Activated B cell treated with CpG ODN at 0.5 μM for 24 hours (primary cell): ENCODE measurements at regions of chr7 and their contacts with region 1.

Region 1: DNA sequence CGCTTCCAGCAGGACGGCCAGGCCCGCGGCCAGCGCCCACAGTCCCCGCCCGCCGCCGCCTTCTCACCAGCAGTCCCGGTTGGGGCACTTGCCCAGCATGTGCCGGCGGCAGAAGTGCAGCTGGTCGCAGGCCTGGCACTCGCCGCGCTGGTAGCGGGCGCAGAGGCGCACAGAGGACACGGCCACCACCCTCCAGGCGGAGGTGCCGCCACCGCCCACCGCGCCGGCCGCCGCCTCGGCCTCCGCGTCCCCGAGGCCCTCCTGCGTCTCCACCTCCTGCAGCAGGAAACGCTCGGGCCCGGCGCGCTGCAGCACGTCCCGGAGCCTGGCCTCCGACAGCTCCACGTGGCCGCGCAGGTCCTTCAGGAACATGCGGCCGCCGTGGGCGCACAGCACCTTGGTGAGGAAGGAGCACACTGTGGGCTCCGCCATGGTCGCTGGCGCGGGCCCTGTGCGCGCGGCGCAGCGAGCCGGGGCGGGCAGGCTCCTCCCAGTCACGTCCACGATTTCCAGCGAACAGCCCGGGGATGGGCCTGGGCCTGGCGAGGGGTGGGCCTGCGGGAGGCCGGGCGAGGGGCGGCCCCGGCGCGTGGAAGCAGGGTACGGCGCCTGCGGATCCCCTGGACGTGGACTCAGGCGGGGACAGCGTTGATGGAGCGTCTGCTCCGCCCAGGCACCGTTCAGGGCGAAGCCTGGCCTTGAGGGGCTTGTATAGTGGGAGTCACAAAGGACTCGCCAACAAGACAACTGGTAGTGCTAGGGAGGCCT is at the start of gene ZC3HAV1L:
- DNase-seq: peak; percentile 34
- ATAC-seq: peak; percentile 73
- H3K4me3 Mint-ChIP-seq: peak within 1 kb of the TSS; percentile 81
- H3K27ac Mint-ChIP-seq: no peak within 1 kb of the TSS
- H3K4me1 Mint-ChIP-seq: peaks cover 10% of the 10 kb centered on the region
- H3K27me3 Mint-ChIP-seq: no peaks in the 10 kb centered on the region
- CTCF ChIP-seq: no peak
- total RNA-seq, gene ZC3HAV1L: 1.6 and 1.8 TPM in 2 replicates

Region 2: GRCh38 chr7:138257459-138258196 is 778.1 kb before region 1 on chr7:
- CTCF ChIA-PET with region 1: no interaction called
- POLR2A ChIA-PET with region 1: no interaction called
- intact Hi-C with region 1: no loop called
- DNase-seq: no peak
- ATAC-seq: no peak
- H3K4me3 Mint-ChIP-seq: no peak overlapping the region
- H3K27ac Mint-ChIP-seq: no peak overlapping the region
- H3K4me1 Mint-ChIP-seq: no peaks in the 10 kb centered on the region
- H3K27me3 Mint-ChIP-seq: no peaks in the 10 kb centered on the region
- CTCF ChIP-seq: no peak

Region 3: GRCh38 chr7:138720286-138720685 is 315.5 kb before region 1 on chr7:
- CTCF ChIA-PET with region 1: no interaction called
- POLR2A ChIA-PET with region 1: no interaction called
- intact Hi-C with region 1: no loop called
- DNase-seq: no peak
- ATAC-seq: no peak
- H3K4me3 Mint-ChIP-seq: no peak overlapping the region
- H3K27ac Mint-ChIP-seq: no peak overlapping the region
- H3K4me1 Mint-ChIP-seq: peaks cover 5% of the 10 kb centered on the region
- H3K27me3 Mint-ChIP-seq: peaks cover 15% of the 10 kb centered on the region
- CTCF ChIP-seq: no peak

Region 4: GRCh38 chr7:138814806-138815332 is 220.9 kb before region 1 on chr7:
- CTCF ChIA-PET with region 1: no interaction called
- POLR2A ChIA-PET with region 1: no interaction called
- intact Hi-C with region 1: no loop called
- DNase-seq: no peak
- ATAC-seq: no peak
- H3K4me3 Mint-ChIP-seq: no peak overlapping the region
- H3K27ac Mint-ChIP-seq: no peak overlapping the region
- H3K4me1 Mint-ChIP-seq: no peaks in the 10 kb centered on the region
- H3K27me3 Mint-ChIP-seq: peaks cover 1% of the 10 kb centered on the region
- CTCF ChIP-seq: no peak

Region 5: DNA sequence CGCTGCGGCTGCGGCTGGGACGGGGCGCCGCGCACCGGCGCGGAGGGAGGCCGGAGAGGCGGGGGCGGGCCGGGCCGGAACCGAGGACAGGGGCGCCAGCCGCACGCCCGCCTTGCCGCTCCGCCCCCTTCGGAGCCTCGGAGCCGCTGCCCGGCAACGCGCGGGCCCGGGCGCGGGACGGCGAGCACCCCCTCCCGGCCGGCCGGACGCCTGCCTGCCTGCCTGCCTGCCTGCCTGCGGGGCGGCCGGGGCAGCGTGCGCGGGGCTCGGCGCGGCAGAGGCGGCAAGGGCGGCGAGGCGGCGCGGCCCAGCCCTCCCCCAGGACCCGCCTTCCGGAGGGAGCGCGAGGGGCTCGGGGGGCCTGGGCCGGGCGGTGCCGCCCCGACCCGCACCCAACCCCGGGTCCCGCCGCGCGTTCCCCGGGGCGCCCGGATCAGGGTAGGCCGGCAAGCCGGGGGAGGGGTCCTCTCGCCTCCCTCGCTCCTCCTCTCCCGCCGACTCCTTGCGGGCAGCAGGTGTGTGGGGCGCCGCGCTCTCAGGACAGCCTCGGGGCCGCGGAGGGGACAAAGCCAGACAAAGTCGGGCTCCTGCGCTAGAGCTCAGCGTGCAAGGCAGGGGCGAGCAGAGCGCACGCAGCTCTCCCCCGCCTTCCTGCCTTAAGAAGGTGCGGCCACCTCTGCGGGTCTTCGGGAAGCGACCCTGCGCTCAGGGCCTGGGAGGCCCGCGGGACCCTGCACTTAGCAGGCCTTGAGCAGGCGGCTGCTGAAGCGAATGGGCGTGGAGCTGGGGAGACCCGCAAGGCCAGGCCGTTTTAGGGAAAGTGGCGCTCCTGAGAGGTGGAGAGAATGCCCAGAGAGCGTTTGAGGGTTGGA is 54.2 kb before region 1 on chr7 and contains the start of gene KIAA1549:
- CTCF ChIA-PET with region 1: no interaction called
- POLR2A ChIA-PET with region 1: no interaction called
- intact Hi-C with region 1: loop called (anchors 2 kb)
- DNase-seq: peak; percentile 61
- ATAC-seq: peak; percentile 93
- H3K4me3 Mint-ChIP-seq: peak within 1 kb of the TSS; percentile 88
- H3K27ac Mint-ChIP-seq: no peak within 1 kb of the TSS
- H3K4me1 Mint-ChIP-seq: peaks cover 12% of the 10 kb centered on the region
- H3K27me3 Mint-ChIP-seq: peaks cover 45% of the 10 kb centered on the region
- CTCF ChIP-seq: no peak
- total RNA-seq, gene KIAA1549: 0.42 and 0.46 TPM in 2 replicates

Region 6: GRCh38 chr7:140096459-140096858 is 1060.7 kb after region 1 on chr7:
- CTCF ChIA-PET with region 1: no interaction called
- POLR2A ChIA-PET with region 1: no interaction called
- intact Hi-C with region 1: no loop called
- DNase-seq: no peak
- ATAC-seq: no peak
- H3K4me3 Mint-ChIP-seq: no peak overlapping the region
- H3K27ac Mint-ChIP-seq: no peak overlapping the region
- H3K4me1 Mint-ChIP-seq: no peaks in the 10 kb centered on the region
- H3K27me3 Mint-ChIP-seq: no peaks in the 10 kb centered on the region
- CTCF ChIP-seq: no peak